ENCODE measurements at regions of chr4 and their contacts with region 1.

Region 1: GRCh38 chr4:74133786-74134499 is 24.0 kb upstream of the MTHFD2L start:
- DNase-seq: peak; percentile 73
- H3K4me3 ChIP-seq: no peak overlapping the region
- CTCF ChIP-seq: peak; percentile 75

Region 2: GRCh38 chr4:73315091-73315490 is 818.9 kb before region 1 on chr4:
- CTCF ChIA-PET with region 1: interaction called, 12 read pairs
- POLR2A ChIA-PET with region 1: no interaction called
- DNase-seq: no peak
- H3K4me3 ChIP-seq: no peak overlapping the region
- CTCF ChIP-seq: no peak

Region 3: DNA sequence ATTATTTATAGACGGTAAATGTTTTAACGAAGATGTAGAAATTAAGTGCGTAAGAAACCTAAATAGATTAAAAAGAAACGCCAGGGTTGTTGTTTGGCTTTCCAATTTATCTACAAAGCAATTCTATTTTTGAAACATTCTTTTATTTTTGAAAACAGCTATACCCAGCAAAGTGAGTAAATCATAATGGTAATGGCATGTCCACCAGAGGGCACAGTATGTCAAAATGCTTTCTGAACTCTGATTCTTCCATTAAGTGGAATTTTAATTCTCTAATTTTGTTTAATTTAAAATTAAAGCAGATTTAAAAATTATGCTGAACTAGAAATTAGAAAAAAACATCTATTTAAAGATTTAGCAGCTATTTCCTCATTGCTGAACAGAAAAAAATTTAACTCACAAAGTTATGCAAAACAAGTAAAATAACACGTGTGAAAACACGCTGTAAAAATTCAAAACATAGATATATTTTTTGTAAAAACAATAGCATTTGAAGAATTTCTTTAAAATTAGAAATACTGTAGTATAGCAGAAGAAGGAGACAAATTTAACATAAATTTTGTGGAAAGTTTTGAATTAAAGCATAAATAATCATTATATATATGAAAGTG is 540.2 kb before region 1 on chr4:
- CTCF ChIA-PET with region 1: interaction called, 38 read pairs
- POLR2A ChIA-PET with region 1: no interaction called
- DNase-seq: no peak
- H3K4me3 ChIP-seq: no peak overlapping the region
- CTCF ChIP-seq: peak; percentile 36

Region 4: GRCh38 chr4:73662709-73663546 is 471.0 kb before region 1 on chr4:
- CTCF ChIA-PET with region 1: interaction called, 80 read pairs
- POLR2A ChIA-PET with region 1: no interaction called
- DNase-seq: no peak
- H3K4me3 ChIP-seq: no peak overlapping the region
- CTCF ChIP-seq: peak; percentile 44

Region 5: GRCh38 chr4:73922766-73923630 is 210.9 kb before region 1 on chr4:
- CTCF ChIA-PET with region 1: interaction called, 15 read pairs
- POLR2A ChIA-PET with region 1: no interaction called
- DNase-seq: no peak
- H3K4me3 ChIP-seq: no peak overlapping the region
- CTCF ChIP-seq: peak; percentile 21

Region 6: DNA sequence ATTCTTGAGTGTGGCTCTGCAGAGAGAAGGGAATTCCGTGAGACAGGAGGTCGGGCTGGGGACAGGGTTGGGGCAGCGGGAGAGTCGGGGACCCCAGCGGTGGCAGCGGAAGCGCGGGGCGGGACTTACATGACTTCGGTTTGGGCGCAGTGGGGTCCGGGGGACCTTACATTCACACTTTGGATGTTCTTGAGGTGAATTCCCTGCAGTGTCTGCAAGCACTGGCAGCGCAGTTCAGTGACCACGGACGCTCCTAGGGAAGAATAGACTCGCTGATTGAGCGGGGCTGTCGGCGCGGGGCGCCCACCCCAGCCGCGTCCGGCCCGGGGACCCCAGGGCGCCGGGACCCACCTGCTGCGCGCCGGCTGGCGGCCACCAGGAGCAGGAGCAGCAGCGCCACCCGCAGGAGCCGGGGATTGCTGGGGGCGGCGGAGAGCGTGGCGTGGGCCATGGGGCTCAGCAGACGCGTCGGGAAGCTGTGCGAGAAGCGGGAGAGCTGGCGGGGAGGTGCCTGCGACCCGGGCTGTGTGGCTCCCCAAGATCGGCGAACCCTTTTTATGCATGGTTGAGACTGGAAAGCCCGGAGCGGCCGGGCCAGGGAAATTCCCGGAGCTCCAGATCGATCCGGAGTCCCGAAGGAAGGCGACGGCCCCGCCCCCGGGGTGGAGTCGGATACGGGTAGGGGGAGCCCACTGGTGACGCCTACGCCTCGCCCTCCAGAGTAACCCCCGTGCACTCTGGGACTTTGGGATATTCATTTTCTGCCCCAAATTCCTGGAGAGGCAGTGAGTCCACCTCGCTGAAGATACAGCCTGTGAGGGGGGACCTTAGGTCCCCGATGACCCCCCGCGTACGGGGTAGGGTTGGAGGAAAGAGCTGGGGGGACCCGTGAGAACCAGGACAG is 95.5 kb before region 1 on chr4 and contains the start of gene CXCL3:
- CTCF ChIA-PET with region 1: interaction called, 24 read pairs
- POLR2A ChIA-PET with region 1: no interaction called
- DNase-seq: no peak
- H3K4me3 ChIP-seq: peak within 1 kb of the TSS; percentile 71
- CTCF ChIP-seq: peak; percentile 11

Region 7: GRCh38 chr4:74146581-74147129 is 12.7 kb after region 1 on chr4:
- CTCF ChIA-PET with region 1: interaction called, 33 read pairs
- POLR2A ChIA-PET with region 1: interaction called, 3 read pairs
- DNase-seq: no peak
- H3K4me3 ChIP-seq: no peak overlapping the region
- CTCF ChIP-seq: no peak

Region 8: GRCh38 chr4:74483290-74483911 is 349.5 kb after region 1 on chr4:
- CTCF ChIA-PET with region 1: no interaction called
- POLR2A ChIA-PET with region 1: no interaction called
- DNase-seq: no peak
- H3K4me3 ChIP-seq: no peak overlapping the region
- CTCF ChIP-seq: no peak

Measured in AG04449 (cell line).